ENCODE measurements at regions of chr2 and their contacts with region 1.

Region 1: DNA sequence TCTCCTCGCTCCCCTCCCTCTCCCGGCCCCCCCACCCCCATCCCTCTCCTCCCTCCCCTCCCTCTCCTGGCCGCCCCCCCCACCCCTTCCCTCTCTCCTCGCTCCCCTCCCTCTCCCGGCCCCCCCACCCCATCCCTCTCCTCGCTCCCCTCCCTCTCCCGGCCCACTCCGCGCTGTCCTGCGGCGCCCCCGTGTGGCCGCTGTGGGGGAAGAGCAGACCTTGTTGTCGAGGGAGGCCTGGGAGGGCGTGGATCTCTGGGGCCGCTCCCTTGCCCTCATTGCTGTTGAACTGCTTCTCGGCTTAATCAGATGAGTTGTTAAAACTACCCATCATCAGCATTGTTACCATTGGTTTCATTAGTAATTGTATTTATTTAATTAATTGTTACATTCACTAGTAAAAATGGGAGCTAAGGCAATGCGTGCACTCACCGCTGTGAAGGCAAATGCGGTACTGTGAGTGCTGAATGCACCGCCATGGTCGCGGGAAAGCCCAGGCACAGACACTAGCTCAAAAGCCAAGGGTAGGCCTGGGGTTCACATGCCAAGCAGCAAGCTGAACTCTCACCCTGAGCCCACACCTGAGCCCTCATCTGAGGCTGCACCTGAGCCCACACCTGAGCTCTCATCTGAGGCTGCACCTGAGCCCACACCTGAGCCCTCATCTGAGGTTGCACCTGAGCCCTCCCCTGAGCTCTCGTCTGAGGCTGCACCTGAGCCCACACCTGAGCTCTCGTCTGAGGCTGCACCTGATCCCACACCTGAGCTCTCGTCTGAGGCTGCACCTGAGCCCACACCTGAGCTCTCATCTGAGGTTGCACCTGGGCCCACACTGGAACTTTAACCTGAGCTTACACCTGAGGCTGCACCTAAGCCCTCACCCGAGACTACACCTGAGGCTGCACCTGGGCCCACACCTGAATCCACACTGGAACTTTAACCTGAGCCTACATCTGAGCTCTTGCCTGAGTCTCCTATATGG is 8.8 kb downstream of the RTP5 start:
- DNase-seq: no peak
- H3K4me3 ChIP-seq: no peak overlapping the region
- H3K27ac ChIP-seq: no peak overlapping the region
- H3K4me1 ChIP-seq: peaks cover 22% of the 10 kb centered on the region
- H3K27me3 ChIP-seq: no peaks in the 10 kb centered on the region
- CTCF ChIP-seq: peak in 2 of 3 experiments; percentile 39 to 58
- POLR2A ChIP-seq: no peak

Region 2: GRCh38 chr2:240898108-240898730 is 980.1 kb before region 1 on chr2:
- intact Hi-C with region 1: no loop called
- DNase-seq: no peak
- H3K4me3 ChIP-seq: no peak overlapping the region
- H3K27ac ChIP-seq: peak overlapping the region; percentile 54
- H3K4me1 ChIP-seq: peaks cover 42% of the 10 kb centered on the region
- H3K27me3 ChIP-seq: no peaks in the 10 kb centered on the region
- CTCF ChIP-seq: no peak
- POLR2A ChIP-seq: no peak

Region 3: DNA sequence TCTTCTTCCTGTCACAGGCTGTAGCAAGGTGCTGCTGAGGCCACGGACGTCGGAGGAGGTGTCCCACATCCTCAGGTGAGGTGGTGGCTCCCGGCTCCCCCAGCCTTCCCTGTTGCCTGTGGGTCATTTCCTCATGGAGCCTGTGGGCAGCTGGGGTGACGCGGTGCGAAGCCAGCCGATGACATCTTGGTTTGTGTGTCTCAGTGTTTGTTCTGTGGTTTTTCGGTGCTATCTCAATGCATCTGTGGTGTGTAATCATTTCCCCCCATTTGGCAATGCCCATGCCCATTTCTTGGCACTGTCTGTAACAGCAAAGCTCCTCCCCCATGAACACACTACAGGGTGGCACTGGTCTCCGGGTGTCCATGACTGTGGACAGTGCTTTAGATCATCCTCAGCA is 137.3 kb before region 1 on chr2:
- intact Hi-C with region 1: loop called (anchors 10 kb)
- DNase-seq: no peak
- H3K4me3 ChIP-seq: no peak overlapping the region
- H3K27ac ChIP-seq: no peak overlapping the region
- H3K4me1 ChIP-seq: peaks cover 13% of the 10 kb centered on the region
- H3K27me3 ChIP-seq: no peaks in the 10 kb centered on the region
- CTCF ChIP-seq: no peak
- POLR2A ChIP-seq: no peak

Measured in vagina (tissue), 2 donors.